K562 (cell line): ENCODE measurements at regions of chr17 and their contacts with region 1.

Region 1: GRCh38 chr17:2244545-2245525 is 58.8 kb downstream of the SMG6 start:
- DNase-seq: peak; percentile 56 to 67 (median 62)
- ATAC-seq: peak; percentile 88
- H3K4me3 ChIP-seq: no peak overlapping the region
- H3K27ac ChIP-seq: no peak overlapping the region
- H3K4me1 ChIP-seq: no peaks in the 10 kb centered on the region; a peak in 1 of 5 replicates
- H3K27me3 ChIP-seq: no peaks in the 10 kb centered on the region
- CTCF ChIP-seq: peak; percentile 84 to 89 (median 88)
- EP300 ChIP-seq: no peak
- POLR2A ChIP-seq: no peak
- RAD21 ChIP-seq: peak; percentile 79 to 93

Region 2: GRCh38 chr17:1267471-1267947 is 977.3 kb before region 1 on chr17:
- CTCF ChIA-PET with region 1: no interaction called
- POLR2A ChIA-PET with region 1: no interaction called
- in situ Hi-C with region 1: no loop called
- intact Hi-C with region 1: no loop called
- DNase-seq: peak in 1 of 4 experiments; percentile 17
- ATAC-seq: no peak
- H3K4me3 ChIP-seq: peak overlapping the region; percentile 48
- H3K27ac ChIP-seq: no peak overlapping the region; the same call in 2 of the 3 replicates
- H3K4me1 ChIP-seq: peaks cover 2 to 24% of the 10 kb centered on the region in 2 experiments; a peak in 4 of 5 replicates
- H3K27me3 ChIP-seq: no peaks in the 10 kb centered on the region
- CTCF ChIP-seq: no peak
- EP300 ChIP-seq: no peak
- POLR2A ChIP-seq: no peak
- RAD21 ChIP-seq: no peak

Region 3: DNA sequence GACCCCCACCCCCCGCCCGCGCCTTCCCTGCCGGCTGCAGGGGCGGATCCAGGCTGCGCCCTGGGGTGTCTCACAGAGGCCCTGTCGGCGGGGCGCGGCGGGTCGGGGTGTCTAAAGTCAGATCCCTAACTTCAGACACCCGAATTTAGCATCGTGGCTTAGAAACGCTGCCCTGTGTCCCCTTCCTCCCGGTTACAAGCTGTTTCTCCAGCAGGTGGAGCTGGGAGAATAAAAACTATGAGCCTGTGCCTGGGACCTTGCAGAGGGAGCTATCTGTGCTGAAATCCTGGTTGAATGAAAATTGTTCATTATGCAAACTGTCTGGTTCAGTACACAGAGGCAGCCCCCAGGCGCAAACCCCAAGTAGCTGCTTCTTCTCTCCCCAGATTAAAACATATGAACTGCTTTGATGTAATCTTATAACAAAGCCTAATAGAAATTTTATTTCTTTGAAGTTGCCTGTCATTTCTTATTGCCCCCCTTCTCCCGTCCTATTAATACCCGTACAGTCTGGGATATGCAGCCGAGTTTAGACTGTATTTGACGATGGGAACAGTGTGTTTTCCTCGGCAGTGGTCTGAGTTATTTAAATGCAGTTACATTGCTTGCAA is 336.0 kb before region 1 on chr17:
- CTCF ChIA-PET with region 1: interaction called, 3 read pairs
- POLR2A ChIA-PET with region 1: no interaction called
- in situ Hi-C with region 1: loop called (anchors 25 kb)
- intact Hi-C with region 1: no loop called
- DNase-seq: peak; percentile 26 to 68 (median 44)
- ATAC-seq: peak; percentile 92
- H3K4me3 ChIP-seq: no peak overlapping the region
- H3K27ac ChIP-seq: no peak overlapping the region
- H3K4me1 ChIP-seq: peaks cover 0 to 16% of the 10 kb centered on the region in 2 experiments; a peak in 3 of 5 replicates
- H3K27me3 ChIP-seq: peaks cover 21 to 36% of the 10 kb centered on the region in 2 experiments; a peak in 4 of 5 replicates
- CTCF ChIP-seq: peak; percentile 58 to 77 (median 75)
- EP300 ChIP-seq: no peak
- POLR2A ChIP-seq: no peak
- RAD21 ChIP-seq: peak; percentile 71 to 84

Region 4: DNA sequence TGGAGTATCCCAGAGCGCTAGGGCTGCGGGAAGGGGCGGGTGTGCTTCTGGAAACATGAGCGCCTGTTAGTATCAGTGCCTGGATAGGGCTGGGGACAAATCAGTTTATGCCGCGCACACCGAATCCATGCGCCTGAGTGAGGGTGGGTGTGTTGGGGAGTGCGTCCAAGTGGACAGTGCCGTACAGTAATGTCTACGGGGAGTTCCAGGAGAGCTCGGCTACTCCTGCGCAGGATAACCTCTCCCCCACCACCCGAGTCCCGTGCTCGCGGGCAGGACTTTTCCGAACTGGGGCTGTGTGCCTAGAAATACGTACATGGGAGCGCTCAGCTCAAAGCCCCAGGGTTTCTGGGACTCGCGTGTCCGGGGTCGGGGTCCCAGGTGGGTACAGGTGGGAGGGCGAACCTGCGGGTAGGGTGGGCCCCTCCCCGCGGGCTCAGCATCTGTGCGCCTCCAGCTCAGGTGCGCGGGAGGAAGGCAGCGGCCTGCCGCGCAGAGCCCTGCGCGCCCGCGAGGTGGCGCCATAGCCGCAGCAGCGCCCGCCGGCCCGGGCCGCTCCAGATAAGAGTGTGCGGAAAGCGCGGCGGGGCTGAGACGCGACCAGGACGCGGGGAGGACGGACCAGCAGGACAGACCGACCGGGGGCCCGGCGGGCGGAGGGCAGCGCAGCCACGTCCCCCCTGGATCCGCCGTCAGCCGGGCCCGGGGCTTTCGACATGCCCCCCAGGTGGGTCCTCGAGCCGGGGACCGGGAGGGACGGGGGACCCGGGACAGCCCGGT is 190.1 kb before region 1 on chr17 and contains the start of gene HIC1:
- CTCF ChIA-PET with region 1: interaction called, 25 read pairs
- POLR2A ChIA-PET with region 1: no interaction called
- in situ Hi-C with region 1: no loop called
- intact Hi-C with region 1: loop called (anchors 1 kb)
- DNase-seq: peak; percentile 51 to 67 (median 52)
- ATAC-seq: peak; percentile 78
- H3K4me3 ChIP-seq: peak within 1 kb of the TSS; percentile 37
- H3K27ac ChIP-seq: no peak within 1 kb of the TSS
- H3K4me1 ChIP-seq: peaks cover 0 to 57% of the 10 kb centered on the region in 2 experiments; a peak in 2 of 5 replicates
- H3K27me3 ChIP-seq: no peaks in the 10 kb centered on the region
- CTCF ChIP-seq: peak; percentile 46 to 62 (median 56); a peak in 5 of 6 replicates
- EP300 ChIP-seq: no peak
- POLR2A ChIP-seq: no peak
- RAD21 ChIP-seq: peak; percentile 53 to 73
- polyA plus RNA-seq, gene HIC1: 0.01 to 0.03 TPM

Region 5: DNA sequence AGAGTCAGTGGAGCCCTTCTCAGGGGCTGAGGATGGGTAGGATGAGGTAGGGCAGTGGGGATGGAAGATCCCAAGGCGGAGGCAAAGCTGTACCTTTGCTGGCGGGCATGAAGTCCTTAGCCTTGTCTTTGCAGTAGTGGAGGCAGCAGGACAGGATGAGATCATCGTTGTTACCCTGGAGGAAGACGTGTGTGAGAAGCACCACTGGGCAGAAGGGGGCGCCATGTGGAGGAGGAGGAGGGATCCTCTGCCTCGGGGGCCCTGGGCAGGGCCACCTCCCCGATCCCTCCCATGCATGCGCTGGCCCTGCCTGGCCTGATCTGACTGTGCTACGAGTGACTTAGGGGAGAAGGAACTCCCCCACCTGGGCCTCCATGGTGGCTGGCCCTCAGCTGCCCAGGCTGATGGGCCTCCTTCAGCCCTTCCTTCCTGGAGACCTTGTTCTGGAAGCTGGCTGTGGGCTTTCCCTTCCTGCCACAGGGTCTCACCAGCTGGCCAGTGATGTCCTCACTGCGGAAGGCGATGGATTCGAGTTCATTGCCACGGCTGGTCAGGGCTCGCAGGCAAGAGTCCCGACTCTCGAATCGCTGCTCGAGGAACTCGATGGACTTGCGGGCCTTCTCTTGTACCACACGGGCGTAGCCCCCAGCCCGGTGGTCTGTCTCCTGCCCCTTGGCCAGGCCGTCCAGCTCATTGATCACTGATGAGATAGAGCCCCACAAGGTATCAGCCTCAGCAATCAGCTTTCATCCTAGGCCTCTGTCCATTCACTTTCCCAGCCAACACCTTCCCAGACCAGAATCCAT is 179.7 kb before region 1 on chr17:
- CTCF ChIA-PET with region 1: interaction called, 3 read pairs
- POLR2A ChIA-PET with region 1: no interaction called
- in situ Hi-C with region 1: loop called (anchors 10 kb)
- intact Hi-C with region 1: no loop called
- DNase-seq: peak; percentile 59 to 78 (median 66)
- ATAC-seq: peak; percentile 95
- H3K4me3 ChIP-seq: no peak overlapping the region
- H3K27ac ChIP-seq: no peak overlapping the region
- H3K4me1 ChIP-seq: peaks cover 0 to 20% of the 10 kb centered on the region in 2 experiments; a peak in 2 of 5 replicates
- H3K27me3 ChIP-seq: no peaks in the 10 kb centered on the region
- CTCF ChIP-seq: peak; percentile 53 to 65 (median 62)
- EP300 ChIP-seq: no peak
- POLR2A ChIP-seq: no peak
- RAD21 ChIP-seq: peak in 1 of 2 experiments; percentile 66; a peak in 2 of 4 replicates